Activated CD8-positive, alpha-beta T cell treated with anti-CD3 and anti-CD28 coated beads for 36 hours (primary cell): ENCODE measurements at regions of chr13 and their contacts with region 1.

Region 1: GRCh38 chr13:50236898-50237318 is 221.7 kb downstream of the KCNRG start:
- DNase-seq: peak; percentile 72
- ATAC-seq: peak; percentile 83
- H3K4me3 Mint-ChIP-seq: peak overlapping the region; percentile 20
- H3K27ac Mint-ChIP-seq: peak overlapping the region; percentile 65
- H3K4me1 Mint-ChIP-seq: peaks cover 45% of the 10 kb centered on the region
- H3K27me3 Mint-ChIP-seq: peaks cover 15% of the 10 kb centered on the region
- CTCF ChIP-seq: no peak

Region 2: DNA sequence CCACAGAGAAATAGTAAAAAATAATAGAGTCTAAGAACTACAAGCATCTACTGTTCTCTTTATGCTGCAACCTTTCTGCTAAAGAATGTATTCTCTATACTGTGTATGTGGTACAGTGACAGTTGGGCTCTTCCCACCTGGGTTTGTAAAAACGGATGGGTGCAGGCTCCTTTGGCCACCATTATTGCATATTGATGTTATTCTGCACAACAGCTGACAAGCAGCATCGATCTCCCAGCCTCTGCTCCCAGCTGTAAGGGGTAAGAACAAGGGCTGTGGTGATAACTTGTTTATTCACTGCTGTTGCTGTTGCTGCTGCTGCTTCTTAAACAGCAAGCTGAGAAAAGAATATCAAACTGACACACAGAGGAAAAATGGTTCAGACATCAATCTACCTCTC is 165.5 kb before region 1 on chr13:
- CTCF ChIA-PET with region 1: no interaction called
- POLR2A ChIA-PET with region 1: no interaction called
- intact Hi-C with region 1: no loop called
- DNase-seq: no peak
- ATAC-seq: no peak
- H3K4me3 Mint-ChIP-seq: no peak overlapping the region
- H3K27ac Mint-ChIP-seq: no peak overlapping the region
- H3K4me1 Mint-ChIP-seq: peaks cover 11% of the 10 kb centered on the region
- H3K27me3 Mint-ChIP-seq: peaks cover 6% of the 10 kb centered on the region
- CTCF ChIP-seq: no peak

Region 3: DNA sequence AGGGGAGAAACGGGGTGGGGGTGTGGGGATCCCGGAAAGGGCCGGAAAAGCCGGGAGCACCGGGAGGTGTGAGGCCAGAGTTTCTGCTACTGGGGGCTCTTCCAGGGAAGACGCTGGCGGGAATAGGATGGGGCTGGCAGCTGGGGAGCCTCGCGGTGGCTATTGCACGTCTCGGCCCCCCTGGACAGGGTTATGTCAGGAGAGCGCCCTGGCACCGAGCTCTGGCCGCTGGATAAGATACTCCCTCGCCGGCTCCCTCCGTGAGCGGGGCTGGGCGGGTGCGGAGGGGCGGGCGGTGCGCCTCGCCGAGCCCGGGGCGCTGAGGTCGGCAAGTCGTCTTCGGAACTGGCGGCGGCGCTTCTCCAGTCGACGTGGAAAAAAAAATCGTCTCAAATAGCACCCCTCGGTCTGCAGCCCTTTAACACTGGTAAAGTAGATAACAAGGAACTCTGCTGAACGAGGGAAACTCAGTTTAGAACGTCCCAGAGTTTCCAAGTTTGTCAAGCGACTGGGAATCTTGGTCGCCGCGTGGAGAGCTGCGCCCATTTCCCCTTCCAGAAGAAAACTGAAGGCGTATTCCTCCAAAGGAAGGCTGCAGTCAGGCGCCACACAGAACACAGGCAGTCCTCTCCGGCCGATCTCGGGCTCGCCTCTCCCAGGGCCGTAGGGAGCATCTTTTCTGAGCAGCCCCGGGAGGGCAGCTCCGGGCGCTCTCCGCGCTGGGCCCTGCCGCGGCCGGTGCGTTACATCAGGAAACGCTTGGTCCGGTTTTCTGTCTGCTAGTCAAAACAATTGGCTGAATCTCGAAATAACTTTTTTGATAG is 106.6 kb before region 1 on chr13:
- CTCF ChIA-PET with region 1: no interaction called
- POLR2A ChIA-PET with region 1: interaction called, 3 read pairs
- intact Hi-C with region 1: loop called (anchors 5 kb)
- DNase-seq: peak; percentile 40
- ATAC-seq: no peak
- H3K4me3 Mint-ChIP-seq: peak overlapping the region; percentile 67
- H3K27ac Mint-ChIP-seq: peak overlapping the region; percentile 25
- H3K4me1 Mint-ChIP-seq: peaks cover 52% of the 10 kb centered on the region
- H3K27me3 Mint-ChIP-seq: peaks cover 61% of the 10 kb centered on the region
- CTCF ChIP-seq: no peak

Region 4: DNA sequence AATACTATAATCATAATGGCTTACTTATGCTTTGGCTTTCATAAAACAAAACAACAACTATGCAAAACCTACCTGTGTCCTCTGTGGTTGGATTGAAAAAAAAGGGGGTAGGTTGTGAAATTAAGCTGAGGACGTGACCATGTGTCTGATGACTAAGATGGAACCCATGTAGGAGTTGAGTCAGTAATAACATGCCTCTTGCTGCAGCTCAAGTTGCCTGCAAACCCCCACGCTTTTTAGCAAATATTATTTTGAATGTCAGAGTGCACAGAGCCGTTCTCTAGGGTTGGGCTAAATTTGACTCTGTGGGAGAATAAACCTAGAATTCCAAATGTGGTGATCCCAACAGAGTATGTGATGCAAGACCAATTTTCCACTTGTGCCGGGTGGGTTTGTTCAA is 12.4 kb before region 1 on chr13:
- CTCF ChIA-PET with region 1: interaction called, 3 read pairs
- POLR2A ChIA-PET with region 1: interaction called, 12 read pairs
- intact Hi-C with region 1: no loop called
- DNase-seq: peak; percentile 66
- ATAC-seq: peak; percentile 75
- H3K4me3 Mint-ChIP-seq: no peak overlapping the region
- H3K27ac Mint-ChIP-seq: no peak overlapping the region
- H3K4me1 Mint-ChIP-seq: peaks cover 51% of the 10 kb centered on the region
- H3K27me3 Mint-ChIP-seq: peaks cover 12% of the 10 kb centered on the region
- CTCF ChIP-seq: no peak

Region 5: GRCh38 chr13:50365408-50366391 is 128.8 kb after region 1 on chr13:
- CTCF ChIA-PET with region 1: no interaction called
- POLR2A ChIA-PET with region 1: interaction called, 3 read pairs
- intact Hi-C with region 1: loop called (anchors 5 kb)
- DNase-seq: peak; percentile 79
- ATAC-seq: peak; percentile 64
- H3K4me3 Mint-ChIP-seq: no peak overlapping the region
- H3K27ac Mint-ChIP-seq: peak overlapping the region; percentile 78
- H3K4me1 Mint-ChIP-seq: peaks cover 38% of the 10 kb centered on the region
- H3K27me3 Mint-ChIP-seq: peaks cover 9% of the 10 kb centered on the region
- CTCF ChIP-seq: no peak